ENCODE measurements at regions of chr11 and their contacts with region 1.

Region 1: DNA sequence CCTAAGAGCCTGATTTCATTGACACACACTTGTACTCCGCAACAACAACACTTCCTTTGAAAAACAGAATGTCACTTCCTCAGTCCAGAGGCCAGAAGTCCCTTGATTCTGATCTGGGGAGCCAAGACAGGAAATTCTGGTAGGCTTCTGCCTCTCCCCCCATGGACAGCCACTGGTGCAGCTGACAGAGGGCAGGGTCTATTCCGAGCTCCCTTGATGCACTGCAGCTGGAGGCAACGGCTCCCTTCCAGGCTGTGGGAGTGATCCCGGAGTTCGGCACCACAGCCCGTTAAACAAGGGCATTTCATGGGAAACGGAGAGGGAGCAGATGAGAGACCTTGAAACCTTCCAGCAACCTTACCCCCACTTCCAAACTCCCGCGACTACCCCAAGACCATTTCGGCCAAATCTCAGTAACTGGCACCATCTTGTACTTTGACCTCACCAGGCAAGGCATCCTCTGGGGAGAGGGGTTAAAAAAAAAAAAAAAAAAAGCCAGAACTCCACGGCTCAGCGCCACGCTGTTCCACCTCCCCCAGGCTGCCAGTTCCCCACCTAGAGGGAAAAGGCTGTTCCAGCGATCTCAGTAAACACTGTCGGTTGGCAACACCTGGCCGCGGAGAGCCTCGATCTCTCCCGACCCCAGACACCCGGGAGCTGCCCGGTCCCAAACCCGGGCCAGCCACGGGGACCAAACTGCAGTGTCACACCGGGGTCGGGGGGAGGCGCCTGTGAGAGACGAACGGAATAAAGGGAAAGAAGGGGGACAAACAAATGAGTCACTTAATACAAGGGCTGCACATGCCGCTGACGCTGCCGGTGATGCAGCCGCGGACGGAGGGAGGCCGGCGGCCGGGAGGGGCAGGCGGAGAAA is 1.1 kb downstream of the GAB2 start:
- DNase-seq: peak; percentile 91
- H3K4me3 ChIP-seq: peak overlapping the region; percentile 40 to 91 (median 75)
- H3K27ac ChIP-seq: peak overlapping the region; percentile 91
- H3K4me1 ChIP-seq: peaks cover 46% of the 10 kb centered on the region
- H3K27me3 ChIP-seq: no peaks in the 10 kb centered on the region
- CTCF ChIP-seq: peak; percentile 28 to 59
- POLR2A ChIP-seq: peak; percentile 58

Region 2: GRCh38 chr11:78079232-78080083 is 337.1 kb before region 1 on chr11 and contains the start of gene NDUFC2:
- CTCF ChIA-PET with region 1: no interaction called
- POLR2A ChIA-PET with region 1: no interaction called
- dilution Hi-C with region 1: no loop called
- intact Hi-C with region 1: loop called (anchors 5 kb)
- DNase-seq: peak; percentile 85
- H3K4me3 ChIP-seq: peak within 1 kb of the TSS; percentile 83 to 97 (median 94)
- H3K27ac ChIP-seq: peak within 1 kb of the TSS; percentile 80
- H3K4me1 ChIP-seq: peaks cover 18% of the 10 kb centered on the region
- H3K27me3 ChIP-seq: no peaks in the 10 kb centered on the region
- CTCF ChIP-seq: no peak
- POLR2A ChIP-seq: peak; percentile 97
- total RNA-seq, gene NDUFC2: 226 and 236 TPM in 2 replicates

Region 3: DNA sequence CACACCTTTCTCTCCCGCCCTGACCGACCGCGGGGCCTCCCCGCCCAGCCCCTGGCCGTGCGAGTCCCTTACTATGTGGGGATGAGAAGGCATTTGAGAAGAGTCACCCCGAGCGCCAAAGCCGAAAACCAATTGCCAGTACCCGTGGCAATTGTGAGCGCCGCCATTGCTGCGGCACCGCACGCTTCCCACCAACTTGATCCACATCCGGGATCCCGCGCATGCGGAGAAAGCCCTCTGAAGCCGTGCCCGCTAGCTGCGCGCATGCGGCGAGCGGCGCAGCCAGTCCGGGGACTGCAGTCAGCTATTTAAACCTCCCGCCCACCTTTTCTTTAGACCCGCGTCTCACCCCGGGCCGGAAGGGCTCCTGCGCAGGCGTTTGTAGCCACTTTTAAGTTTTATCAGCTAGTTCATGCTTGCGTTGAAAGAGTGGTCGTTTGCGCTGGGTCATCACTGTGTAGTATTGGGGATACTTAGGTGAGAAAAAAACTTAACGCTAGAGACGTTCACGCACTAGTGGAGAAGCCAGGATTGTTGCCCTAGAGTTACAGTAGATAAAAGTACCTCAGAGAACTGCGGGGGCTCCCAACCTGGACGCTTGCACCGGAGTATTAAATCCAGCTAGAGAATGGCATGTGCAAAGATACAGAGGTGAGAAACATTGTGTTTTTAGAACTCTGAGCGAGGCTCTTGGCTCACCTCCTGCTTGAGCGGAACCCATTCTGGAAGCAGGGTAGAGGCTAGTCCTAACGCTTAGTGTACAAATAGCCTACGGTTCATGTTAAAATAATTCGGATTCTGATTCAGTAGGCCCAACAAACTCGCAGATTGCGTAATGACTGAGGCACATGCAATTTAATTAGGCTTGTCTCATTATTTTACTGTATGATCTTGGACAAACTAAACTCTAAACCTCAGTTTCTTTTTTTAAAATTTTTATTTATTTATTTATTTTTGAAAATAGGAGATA is 276.8 kb before region 1 on chr11 and contains the start of gene ALG8:
- CTCF ChIA-PET with region 1: no interaction called
- POLR2A ChIA-PET with region 1: no interaction called
- dilution Hi-C with region 1: no loop called
- intact Hi-C with region 1: loop called (anchors 2 kb)
- DNase-seq: peak; percentile 99
- H3K4me3 ChIP-seq: peak within 1 kb of the TSS; percentile 52 to 84 (median 69)
- H3K27ac ChIP-seq: peak within 1 kb of the TSS; percentile 60
- H3K4me1 ChIP-seq: peaks cover 15% of the 10 kb centered on the region
- H3K27me3 ChIP-seq: no peaks in the 10 kb centered on the region
- CTCF ChIP-seq: no peak
- POLR2A ChIP-seq: peak; percentile 89
- total RNA-seq, gene ALG8: 38.1 and 43.9 TPM in 2 replicates

Region 4: GRCh38 chr11:78188286-78189173 is 228.0 kb before region 1 on chr11 and contains the starts of genes KCTD21 and USP35:
- CTCF ChIA-PET with region 1: no interaction called
- POLR2A ChIA-PET with region 1: interaction called, 3 read pairs
- dilution Hi-C with region 1: no loop called
- intact Hi-C with region 1: loop called (anchors 2 kb)
- DNase-seq: peak; percentile 98
- H3K4me3 ChIP-seq: peak within 1 kb of the TSS; percentile 68 to 81 (median 71)
- H3K27ac ChIP-seq: peak within 1 kb of the TSS; percentile 14
- H3K4me1 ChIP-seq: peaks cover 40% of the 10 kb centered on the region
- H3K27me3 ChIP-seq: no peaks in the 10 kb centered on the region
- CTCF ChIP-seq: no peak
- POLR2A ChIP-seq: peak; percentile 90
- total RNA-seq, gene KCTD21: 8.5 and 9.5 TPM in 2 replicates
- total RNA-seq, gene USP35: 10.3 and 12.4 TPM in 2 replicates

Region 5: GRCh38 chr11:78350646-78351165 is 65.8 kb before region 1 on chr11:
- CTCF ChIA-PET with region 1: interaction called, 3 read pairs
- POLR2A ChIA-PET with region 1: no interaction called
- dilution Hi-C with region 1: no loop called
- intact Hi-C with region 1: loop called (anchors 5 kb)
- DNase-seq: peak; percentile 57
- H3K4me3 ChIP-seq: peak overlapping the region in 1 of 3 experiments; percentile 25
- H3K27ac ChIP-seq: peak overlapping the region; percentile 32
- H3K4me1 ChIP-seq: peaks cover 33% of the 10 kb centered on the region
- H3K27me3 ChIP-seq: no peaks in the 10 kb centered on the region
- CTCF ChIP-seq: no peak
- POLR2A ChIP-seq: no peak

Region 6: GRCh38 chr11:78400702-78401101 is 15.8 kb before region 1 on chr11:
- CTCF ChIA-PET with region 1: interaction called, 10 read pairs
- POLR2A ChIA-PET with region 1: no interaction called
- dilution Hi-C with region 1: no loop called
- intact Hi-C with region 1: no loop called
- DNase-seq: no peak
- H3K4me3 ChIP-seq: no peak overlapping the region
- H3K27ac ChIP-seq: no peak overlapping the region
- H3K4me1 ChIP-seq: no peaks in the 10 kb centered on the region
- H3K27me3 ChIP-seq: no peaks in the 10 kb centered on the region
- CTCF ChIP-seq: no peak
- POLR2A ChIP-seq: no peak

Region 7: DNA sequence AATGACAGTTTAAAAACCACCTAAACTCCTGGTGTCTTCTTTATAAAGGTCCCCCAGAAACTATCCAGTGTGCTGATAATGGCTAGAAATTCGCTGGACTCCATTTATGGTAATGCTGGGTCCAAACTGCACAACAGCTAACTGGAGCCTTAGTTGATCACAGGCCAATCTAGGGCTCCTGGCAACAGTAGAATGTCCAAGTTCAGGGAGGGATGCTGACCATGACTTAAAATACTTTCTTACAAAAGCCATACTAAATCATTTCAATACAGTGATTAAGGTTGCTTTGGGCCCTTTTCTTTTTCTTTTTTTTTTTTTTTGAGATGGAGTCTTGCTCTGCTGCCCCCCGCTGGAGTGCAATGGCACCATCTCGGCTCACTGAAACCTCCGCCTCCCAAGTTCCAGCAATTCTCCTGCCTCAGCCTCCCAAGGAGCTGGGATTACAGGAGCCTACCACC is 15.5 kb after region 1 on chr11:
- CTCF ChIA-PET with region 1: interaction called, 100 read pairs
- POLR2A ChIA-PET with region 1: interaction called, 4 read pairs
- dilution Hi-C with region 1: no loop called
- intact Hi-C with region 1: loop called (anchors 1 kb)
- DNase-seq: peak; percentile 40
- H3K4me3 ChIP-seq: no peak overlapping the region
- H3K27ac ChIP-seq: no peak overlapping the region
- H3K4me1 ChIP-seq: no peaks in the 10 kb centered on the region
- H3K27me3 ChIP-seq: no peaks in the 10 kb centered on the region
- CTCF ChIP-seq: peak; percentile 40 to 67
- POLR2A ChIP-seq: no peak